CD14-positive monocyte (primary cell): ENCODE measurements at regions of chr20 and their contacts with region 1.

Region 1: GRCh38 chr20:36773597-36774390 is at the start of gene DSN1:
- DNase-seq: peak; percentile 98
- H3K4me3 ChIP-seq: peak within 1 kb of the TSS; percentile 88 to 94 (median 92)
- H3K4me3 Mint-ChIP-seq: peak within 1 kb of the TSS; percentile 95
- H3K27ac ChIP-seq: peak within 1 kb of the TSS; percentile 93 to 97
- H3K27ac Mint-ChIP-seq: peak within 1 kb of the TSS; percentile 94 to 99 (median 97)
- H3K4me1 ChIP-seq: peaks cover 20 to 33% of the 10 kb centered on the region in 2 donors
- H3K4me1 Mint-ChIP-seq: peaks cover 30% of the 10 kb centered on the region
- H3K27me3 ChIP-seq: no peaks in the 10 kb centered on the region
- H3K27me3 Mint-ChIP-seq: peaks cover 0 to 2% (median 0%) of the 10 kb centered on the region in 3 donors
- CTCF ChIP-seq: peak; percentile 81
- polyA plus RNA-seq, gene DSN1: 4.9 to 5.2 (median 5.1) TPM

Region 2: GRCh38 chr20:36460648-36461599 is 312.9 kb before region 1 on chr20:
- intact Hi-C with region 1: loop called in 1 of 2 experiments (anchors 10 kb)
- DNase-seq: peak; percentile 85 to 93 (median 89)
- H3K4me3 ChIP-seq: peak overlapping the region; percentile 23 to 95 (median 43)
- H3K4me3 Mint-ChIP-seq: peak overlapping the region; percentile 71 to 77
- H3K27ac ChIP-seq: peak overlapping the region; percentile 88 to 91
- H3K27ac Mint-ChIP-seq: peak overlapping the region; percentile 67 to 89 (median 88)
- H3K4me1 ChIP-seq: peaks cover 36 to 52% of the 10 kb centered on the region in 2 donors
- H3K4me1 Mint-ChIP-seq: peaks cover 47% of the 10 kb centered on the region
- H3K27me3 ChIP-seq: no peaks in the 10 kb centered on the region
- H3K27me3 Mint-ChIP-seq: peaks cover 3 to 11% (median 10%) of the 10 kb centered on the region in 3 donors
- CTCF ChIP-seq: no peak

Region 3: DNA sequence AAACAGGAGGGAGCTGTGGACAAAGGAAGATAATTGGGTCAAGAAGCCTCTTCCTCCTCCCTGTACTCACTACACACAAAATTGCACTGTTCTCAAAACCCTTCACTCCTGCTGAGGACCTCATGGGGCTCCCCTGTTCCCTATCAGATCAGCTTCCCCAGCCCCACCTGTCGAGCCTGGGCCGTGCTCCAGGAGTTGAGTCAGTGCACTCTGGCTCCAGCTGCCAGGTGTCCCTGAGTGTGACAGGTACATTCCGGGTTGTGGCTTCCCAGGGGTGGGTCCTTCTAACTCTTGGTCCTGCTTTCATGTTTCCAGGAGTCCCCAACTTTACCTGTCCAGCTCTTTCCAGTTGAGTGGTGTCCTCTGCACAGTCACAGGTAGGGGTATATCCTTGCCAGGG is 159.8 kb before region 1 on chr20:
- intact Hi-C with region 1: loop called in 1 of 2 experiments (anchors 10 kb)
- DNase-seq: no peak
- H3K4me3 ChIP-seq: no peak overlapping the region
- H3K4me3 Mint-ChIP-seq: no peak overlapping the region
- H3K27ac ChIP-seq: peak overlapping the region in 1 of 2 donors; percentile 65
- H3K27ac Mint-ChIP-seq: peak overlapping the region in 3 of 7 donors; percentile 27 to 59 (median 57)
- H3K4me1 ChIP-seq: no peaks in the 10 kb centered on the region
- H3K4me1 Mint-ChIP-seq: peaks cover 3% of the 10 kb centered on the region
- H3K27me3 ChIP-seq: no peaks in the 10 kb centered on the region
- H3K27me3 Mint-ChIP-seq: peaks cover 0 to 3% (median 0%) of the 10 kb centered on the region in 3 donors
- CTCF ChIP-seq: no peak

Region 4: GRCh38 chr20:36792422-36792821 is 18.6 kb after region 1 on chr20:
- intact Hi-C with region 1: no loop called
- DNase-seq: peak in 2 of 3 donors; percentile 16 to 17
- H3K4me3 ChIP-seq: no peak overlapping the region
- H3K4me3 Mint-ChIP-seq: no peak overlapping the region
- H3K27ac ChIP-seq: no peak overlapping the region
- H3K27ac Mint-ChIP-seq: peak overlapping the region in 1 of 7 donors; percentile 36
- H3K4me1 ChIP-seq: no peaks in the 10 kb centered on the region
- H3K4me1 Mint-ChIP-seq: no peaks in the 10 kb centered on the region
- H3K27me3 ChIP-seq: no peaks in the 10 kb centered on the region
- H3K27me3 Mint-ChIP-seq: no peaks in the 10 kb centered on the region
- CTCF ChIP-seq: no peak

Region 5: GRCh38 chr20:36808317-36809257 is 34.8 kb after region 1 on chr20:
- intact Hi-C with region 1: loop called in 1 of 2 experiments (anchors 2 kb)
- DNase-seq: peak; percentile 98 to 100 (median 99)
- H3K4me3 ChIP-seq: no peak overlapping the region
- H3K4me3 Mint-ChIP-seq: no peak overlapping the region
- H3K27ac ChIP-seq: peak overlapping the region; percentile 78 to 87
- H3K27ac Mint-ChIP-seq: peak overlapping the region; percentile 92 to 98 (median 96)
- H3K4me1 ChIP-seq: peaks cover 13 to 17% of the 10 kb centered on the region in 2 donors
- H3K4me1 Mint-ChIP-seq: peaks cover 10% of the 10 kb centered on the region
- H3K27me3 ChIP-seq: no peaks in the 10 kb centered on the region
- H3K27me3 Mint-ChIP-seq: peaks cover 0 to 2% (median 0%) of the 10 kb centered on the region in 3 donors
- CTCF ChIP-seq: peak; percentile 99